SK-N-SH (cell line): ENCODE measurements at regions of chr11 and their contacts with region 1.

Region 1: DNA sequence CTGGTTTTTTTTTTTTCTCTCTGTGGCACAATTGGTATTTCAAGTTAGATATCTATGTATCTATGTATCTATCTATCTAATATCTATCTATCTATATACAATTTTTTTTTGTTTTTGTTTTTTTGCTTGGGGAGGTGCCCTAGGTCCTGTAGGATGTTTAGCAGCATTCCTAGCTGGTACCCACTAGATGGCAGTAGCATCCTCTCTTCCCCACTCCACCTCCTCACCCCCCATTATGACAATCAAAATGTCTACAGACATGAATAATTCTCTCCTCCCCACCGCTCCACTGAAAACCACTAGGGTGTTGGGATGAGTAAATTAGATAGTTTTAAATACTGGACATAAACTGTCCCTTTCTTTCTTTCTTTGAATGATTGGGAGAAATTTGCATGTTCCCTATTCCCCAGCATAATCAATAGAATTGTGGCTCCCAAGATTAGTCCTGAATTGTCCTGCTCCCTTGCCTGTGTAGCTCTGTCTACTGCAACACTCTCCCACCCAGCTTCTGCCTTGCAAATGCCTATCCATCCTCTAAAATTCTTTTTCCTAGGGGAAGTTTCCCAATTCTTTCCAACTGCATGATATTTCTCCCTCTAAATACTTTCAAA is 1152.4 kb downstream of the LRRC4C start:
- DNase-seq: peak; percentile 60
- H3K4me3 ChIP-seq: no peak overlapping the region; a peak in 1 of 4 replicates
- H3K27ac ChIP-seq: no peak overlapping the region
- H3K4me1 ChIP-seq: peaks cover 0 to 7% of the 10 kb centered on the region in 2 experiments; a peak in 1 of 4 replicates
- H3K27me3 ChIP-seq: no peaks in the 10 kb centered on the region
- CTCF ChIP-seq: peak; percentile 87
- EP300 ChIP-seq: no peak
- RAD21 ChIP-seq: peak; percentile 83

Region 2: GRCh38 chr11:40215556-40215955 is 91.5 kb before region 1 on chr11:
- CTCF ChIA-PET with region 1: no interaction called
- POLR2A ChIA-PET with region 1: no interaction called
- DNase-seq: no peak
- H3K4me3 ChIP-seq: no peak overlapping the region
- H3K27ac ChIP-seq: no peak overlapping the region
- H3K4me1 ChIP-seq: peaks cover 0 to 37% of the 10 kb centered on the region in 2 experiments; a peak in 3 of 4 replicates
- H3K27me3 ChIP-seq: no peaks in the 10 kb centered on the region
- CTCF ChIP-seq: no peak
- EP300 ChIP-seq: no peak
- RAD21 ChIP-seq: no peak

Region 3: DNA sequence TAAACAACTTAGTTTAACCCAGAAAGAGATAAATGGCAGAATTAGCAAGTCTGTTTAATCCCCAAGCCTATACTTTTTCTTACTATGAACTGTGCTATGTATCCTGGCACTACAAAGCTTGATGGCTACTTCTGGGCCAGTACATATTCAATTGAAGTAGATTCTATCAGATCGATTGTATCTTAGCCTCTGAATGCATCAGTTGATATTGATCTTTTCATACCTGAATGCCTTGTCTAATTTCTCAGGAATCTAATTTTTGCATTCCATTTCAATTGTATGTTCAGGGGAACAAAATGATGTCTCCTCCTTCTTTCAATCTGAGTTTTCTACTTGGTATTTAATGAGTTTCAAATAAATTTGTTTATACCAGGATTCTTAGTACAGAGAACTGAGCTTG is 14.5 kb after region 1 on chr11:
- CTCF ChIA-PET with region 1: interaction called, 11 read pairs
- POLR2A ChIA-PET with region 1: no interaction called
- DNase-seq: no peak
- H3K4me3 ChIP-seq: no peak overlapping the region
- H3K27ac ChIP-seq: no peak overlapping the region
- H3K4me1 ChIP-seq: peaks cover 0 to 3% of the 10 kb centered on the region in 2 experiments; a peak in 1 of 4 replicates
- H3K27me3 ChIP-seq: no peaks in the 10 kb centered on the region
- CTCF ChIP-seq: no peak
- EP300 ChIP-seq: no peak
- RAD21 ChIP-seq: no peak

Region 4: DNA sequence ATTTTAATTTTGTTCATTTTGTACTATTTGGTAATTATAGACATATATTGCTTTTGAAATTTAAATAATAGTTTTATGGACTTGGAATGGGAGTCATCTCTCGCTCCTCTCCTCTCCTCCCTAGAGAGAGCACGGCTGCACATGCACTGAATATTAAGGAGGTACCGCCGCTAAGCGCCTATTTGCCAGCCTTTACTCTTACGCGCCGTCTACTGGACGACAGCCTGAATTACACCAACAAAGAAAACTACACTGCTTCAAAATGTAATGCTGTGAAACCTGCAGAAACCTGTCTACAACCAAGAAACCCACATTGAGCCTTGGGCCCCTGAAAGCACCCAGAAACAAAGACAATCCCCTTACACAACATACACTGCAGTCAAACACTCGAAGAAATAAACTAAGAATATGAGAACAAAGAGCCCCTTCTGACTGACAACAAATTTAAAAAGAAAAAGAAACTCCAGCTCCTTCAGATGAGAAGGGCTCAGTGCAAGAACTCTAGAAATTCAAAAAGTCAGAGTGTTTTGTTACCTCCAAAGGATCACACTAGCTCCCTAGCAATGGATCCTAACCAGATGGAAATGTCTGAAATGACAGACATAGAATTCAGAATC is 415.2 kb after region 1 on chr11:
- CTCF ChIA-PET with region 1: interaction called, 10 read pairs
- POLR2A ChIA-PET with region 1: no interaction called
- DNase-seq: peak; percentile 44
- H3K4me3 ChIP-seq: no peak overlapping the region; a peak in 1 of 4 replicates
- H3K27ac ChIP-seq: no peak overlapping the region
- H3K4me1 ChIP-seq: no peaks in the 10 kb centered on the region
- H3K27me3 ChIP-seq: no peaks in the 10 kb centered on the region
- CTCF ChIP-seq: peak; percentile 68
- EP300 ChIP-seq: no peak
- RAD21 ChIP-seq: peak; percentile 64